Transverse colon (tissue), 4 donors: ENCODE measurements at regions of chr17 and their contacts with region 1.

Region 1: DNA sequence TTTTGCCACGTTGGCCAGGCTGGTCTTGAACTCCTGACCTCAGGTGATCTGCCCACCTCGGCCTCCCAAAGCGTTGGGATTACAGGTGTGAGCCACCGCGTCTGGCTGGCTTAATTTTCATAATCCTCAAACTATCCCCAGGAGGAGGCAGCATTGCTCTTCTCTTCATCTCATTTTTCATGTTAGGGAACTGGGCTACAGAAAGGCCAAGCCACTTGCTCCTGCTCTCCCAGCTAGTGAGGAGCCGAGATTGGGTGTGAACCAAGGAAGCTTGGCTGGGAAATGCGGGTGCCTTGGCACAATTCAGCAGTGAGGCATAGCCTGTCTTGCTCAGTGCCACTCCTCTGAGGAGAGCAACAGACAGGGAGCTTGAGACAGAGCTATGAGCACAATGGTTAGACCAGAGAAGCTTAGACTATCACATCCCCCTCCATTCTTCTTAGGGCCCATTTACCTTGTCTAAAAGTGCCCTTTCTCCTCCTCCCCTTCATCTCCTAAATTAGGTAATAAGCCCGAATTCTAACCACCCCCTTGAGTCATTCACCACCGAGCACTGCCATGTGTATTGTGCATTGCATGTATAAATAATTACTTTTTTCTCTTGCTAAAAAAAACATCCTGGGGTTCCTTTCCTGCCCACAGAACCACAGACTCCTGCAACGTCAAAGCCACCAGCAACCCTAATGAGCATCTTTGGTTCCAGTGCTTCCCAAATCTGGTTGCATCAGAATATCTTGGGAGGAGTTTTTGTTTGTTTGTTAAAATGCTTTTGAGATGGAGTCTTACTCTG is 20.0 kb upstream of the KIF19 start:
- DNase-seq: no peak
- H3K4me3 ChIP-seq: no peak overlapping the region
- H3K27ac ChIP-seq: no peak overlapping the region
- H3K4me1 ChIP-seq: no peaks in the 10 kb centered on the region
- H3K27me3 ChIP-seq: peaks cover 12% of the 10 kb centered on the region
- CTCF ChIP-seq: no peak
- EP300 ChIP-seq: no peak
- POLR2A ChIP-seq: no peak

Region 2: DNA sequence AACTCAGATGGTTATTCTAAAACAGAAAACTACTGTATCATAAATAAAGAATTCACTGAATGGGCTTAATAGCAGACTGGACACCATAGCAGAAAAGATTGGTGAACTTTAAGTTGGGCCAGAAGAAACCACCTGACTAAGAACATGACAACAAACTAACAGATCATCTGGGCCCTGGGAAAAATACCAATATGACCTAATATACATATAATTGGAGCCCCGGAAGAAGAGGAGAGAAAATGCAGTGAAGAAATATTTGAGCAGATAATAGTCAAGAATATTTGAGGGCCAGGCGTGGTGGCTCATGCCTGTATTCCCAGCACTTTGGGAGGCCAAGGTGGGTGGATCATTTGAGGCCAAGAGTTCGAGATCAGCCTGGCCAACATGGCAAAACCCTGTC is 636.3 kb before region 1 on chr17:
- in situ Hi-C with region 1: no loop called
- intact Hi-C with region 1: no loop called
- DNase-seq: no peak
- H3K4me3 ChIP-seq: no peak overlapping the region
- H3K27ac ChIP-seq: no peak overlapping the region
- H3K4me1 ChIP-seq: peaks cover 0 to 9% (median 0%) of the 10 kb centered on the region in 4 donors
- H3K27me3 ChIP-seq: peaks cover 7% of the 10 kb centered on the region
- CTCF ChIP-seq: no peak
- EP300 ChIP-seq: no peak
- POLR2A ChIP-seq: no peak

Region 3: GRCh38 chr17:74368092-74369081 is 62.3 kb after region 1 on chr17:
- in situ Hi-C with region 1: loop called in 1 of 4 experiments (anchors 10 kb)
- intact Hi-C with region 1: no loop called
- DNase-seq: peak; percentile 79
- H3K4me3 ChIP-seq: no peak overlapping the region
- H3K27ac ChIP-seq: no peak overlapping the region
- H3K4me1 ChIP-seq: peaks cover 3 to 14% (median 11%) of the 10 kb centered on the region in 4 donors
- H3K27me3 ChIP-seq: no peaks in the 10 kb centered on the region
- CTCF ChIP-seq: peak; percentile 92 to 98 (median 95)
- EP300 ChIP-seq: no peak
- POLR2A ChIP-seq: no peak